ENCODE measurements at regions of chr18 and their contacts with region 1.

Region 1: GRCh38 chr18:78672862-78673446 is 306.7 kb upstream of the SALL3 start:
- DNase-seq: no peak
- ATAC-seq: no peak

Region 2: DNA sequence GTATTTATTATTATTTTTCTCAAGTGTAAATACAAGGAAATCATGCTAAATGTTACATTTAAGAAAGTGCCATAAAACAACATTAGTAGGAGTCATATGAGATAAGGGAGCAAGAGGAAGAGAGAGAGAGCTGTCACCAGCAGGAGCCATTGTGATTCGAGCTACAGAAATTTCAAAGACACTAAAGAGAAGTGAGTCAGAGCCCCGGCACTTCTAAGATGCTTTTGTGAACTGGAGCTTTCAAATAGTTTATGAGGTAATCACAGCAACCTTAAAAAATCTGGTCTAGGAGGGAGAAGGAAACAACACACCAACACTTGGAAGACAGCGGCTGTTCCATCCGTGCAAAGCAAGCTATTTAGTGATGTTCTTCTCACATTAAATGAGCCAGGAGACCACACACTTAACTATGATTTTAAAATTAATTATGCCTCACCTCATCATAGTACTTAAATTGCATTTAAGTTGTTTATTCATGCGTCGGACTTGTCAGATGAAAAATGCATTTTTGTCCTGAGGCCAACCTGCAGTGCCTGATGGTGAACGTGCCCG is 76.1 kb before region 1 on chr18:
- intact Hi-C with region 1: no loop called
- DNase-seq: no peak
- ATAC-seq: no peak

Region 3: DNA sequence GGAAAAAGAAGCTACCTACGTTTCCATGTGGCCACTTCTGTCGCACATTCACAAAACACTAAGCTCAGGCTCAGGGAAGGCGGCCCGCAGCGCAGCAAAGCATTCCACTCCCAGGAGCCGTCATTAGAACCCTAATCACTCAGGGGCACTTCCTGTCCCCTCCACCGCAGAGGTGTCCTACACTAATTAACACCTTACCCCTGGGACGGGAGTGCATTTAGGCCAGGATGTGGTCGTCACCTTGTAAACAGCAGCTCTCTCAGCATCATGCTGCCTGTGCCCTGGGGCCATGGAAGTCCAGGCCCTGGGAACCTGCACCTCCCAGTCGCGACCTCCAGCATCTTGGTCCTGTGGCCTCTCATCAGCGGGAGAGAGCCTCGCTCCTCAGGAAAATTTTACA is 53.1 kb before region 1 on chr18:
- intact Hi-C with region 1: loop called (anchors 10 kb)
- DNase-seq: no peak
- ATAC-seq: no peak